ENCODE measurements at regions of chr16 and their contacts with region 1.

Region 1: DNA sequence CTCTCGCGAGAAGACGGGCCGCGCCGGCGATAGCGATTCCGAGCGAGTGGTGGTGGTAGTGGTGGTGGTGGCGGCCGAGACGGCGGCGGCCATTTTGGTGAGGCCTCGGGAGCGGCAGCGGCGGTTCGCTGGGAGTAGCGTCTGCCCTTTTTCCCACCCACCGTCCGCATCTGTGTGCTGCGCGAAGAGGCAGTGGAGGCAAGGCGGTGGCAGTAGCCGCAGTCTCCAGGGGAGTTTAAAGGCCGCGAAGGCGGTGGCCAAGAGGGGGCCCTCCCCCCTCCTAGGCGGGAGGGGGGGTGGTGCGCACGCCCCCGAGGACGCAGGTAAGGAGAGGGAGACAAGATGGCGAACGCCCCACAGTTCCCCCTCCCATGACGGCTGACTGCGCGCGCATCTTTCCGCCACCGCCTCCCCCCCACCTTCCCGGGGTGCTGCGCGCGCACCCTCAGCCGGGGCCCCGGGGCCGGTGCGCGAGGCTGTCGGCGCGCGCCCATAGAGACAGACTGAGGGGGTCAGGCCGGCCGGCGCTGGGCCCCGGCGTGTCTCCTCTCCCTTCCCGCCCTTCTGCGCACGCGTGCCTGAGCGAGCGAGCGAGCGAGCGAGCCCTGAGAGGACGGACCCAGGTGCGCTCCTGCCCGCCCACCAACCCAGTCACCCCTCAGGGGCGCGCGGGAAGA is 694 bp upstream of the SRCAP start:
- DNase-seq: peak; percentile 99

Region 2: DNA sequence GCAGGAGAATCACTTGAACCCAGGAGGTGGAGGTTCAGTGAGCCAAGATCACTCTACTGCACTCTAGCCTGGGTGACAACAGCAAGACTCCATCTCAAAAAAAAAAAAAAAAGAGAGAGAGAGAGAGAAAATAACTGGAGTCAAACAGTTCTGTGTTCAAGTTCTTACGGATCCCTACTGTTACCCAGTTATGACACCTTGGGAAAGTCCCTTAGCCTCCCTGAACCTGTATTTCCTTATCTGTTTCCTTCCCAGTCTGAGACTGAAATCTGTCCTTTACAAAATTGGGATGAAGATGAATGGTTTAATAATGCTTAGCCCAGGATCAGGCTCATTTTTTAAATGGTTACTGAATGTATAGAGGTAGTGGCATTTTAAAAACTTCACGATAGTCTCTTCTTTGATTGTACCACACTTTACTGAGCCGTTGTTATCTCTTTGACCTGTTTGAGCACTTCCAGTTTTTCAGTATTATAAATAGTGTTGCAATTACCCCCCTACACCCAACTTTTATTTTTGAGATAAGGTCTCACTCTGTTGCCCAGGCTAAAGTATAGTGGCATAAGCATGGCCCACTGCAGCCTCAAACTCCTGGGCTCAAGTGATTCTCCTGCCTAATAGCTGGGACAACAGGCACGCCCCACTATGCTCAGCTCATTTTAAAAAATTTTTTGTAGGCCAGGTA is 189.1 kb before region 1 on chr16:
- CTCF ChIA-PET with region 1: no interaction called
- POLR2A ChIA-PET with region 1: no interaction called
- DNase-seq: no peak

Region 3: DNA sequence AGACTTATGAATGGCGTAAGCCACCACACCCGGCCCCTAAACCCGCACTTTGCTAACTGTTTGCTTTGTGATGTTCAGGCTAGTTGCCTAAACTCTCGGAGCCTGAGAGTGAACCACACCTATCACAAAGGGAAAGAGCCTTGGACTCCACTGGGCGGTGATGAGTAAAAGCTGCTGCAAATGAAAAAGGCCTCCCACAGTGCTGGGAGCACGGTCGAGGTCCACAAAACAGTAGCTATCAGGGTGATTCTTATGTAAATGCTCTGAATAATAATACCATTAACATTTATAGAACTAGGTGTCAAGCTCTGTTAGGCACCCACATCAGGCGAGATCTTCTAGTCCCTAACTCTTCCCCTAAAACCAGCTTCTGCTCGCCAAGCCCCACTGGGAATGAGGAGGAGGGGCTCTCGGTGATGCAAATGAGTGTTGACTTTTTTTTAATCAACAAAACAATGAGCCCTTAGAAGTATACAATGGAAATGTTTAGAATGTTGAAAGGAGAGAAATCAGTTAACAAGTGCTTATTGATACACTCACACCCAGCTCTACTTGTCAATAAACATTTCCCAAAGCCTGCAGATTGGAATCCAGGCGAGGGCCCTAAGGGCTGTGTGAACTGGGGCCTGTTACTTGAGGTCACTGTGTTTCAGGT is 20.2 kb before region 1 on chr16:
- CTCF ChIA-PET with region 1: interaction called, 6 read pairs
- POLR2A ChIA-PET with region 1: interaction called, 10 read pairs
- DNase-seq: no peak

Region 4: DNA sequence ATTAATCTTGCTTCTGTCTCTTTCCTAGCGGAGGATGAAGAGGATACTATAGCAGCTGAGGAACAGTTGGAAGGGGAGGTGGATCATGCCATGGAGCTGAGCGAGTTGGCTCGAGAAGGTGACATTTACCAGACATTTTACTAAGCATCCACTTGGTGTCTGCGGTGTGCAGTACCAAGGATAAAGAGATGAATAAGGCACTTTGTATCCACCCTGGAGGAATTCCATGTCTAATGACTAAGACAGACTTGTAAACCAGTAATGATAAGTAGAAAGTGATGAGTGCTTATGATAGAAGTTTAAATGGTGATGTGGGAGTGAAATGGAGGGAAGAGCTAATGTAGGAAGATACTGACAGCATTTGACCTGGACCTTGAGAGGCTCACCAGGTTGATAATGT is 12.7 kb after region 1 on chr16:
- CTCF ChIA-PET with region 1: no interaction called
- POLR2A ChIA-PET with region 1: interaction called, 16 read pairs
- DNase-seq: no peak

Measured in HEK293T (cell line).